Heart right ventricle (tissue), 16 donors: ENCODE measurements at regions of chr6 and their contacts with region 1.

Region 1: GRCh38 chr6:107495196-107495643 is 5.3 kb downstream of the SOBP start:
- DNase-seq: peak in 1 of 2 donors; percentile 39
- ATAC-seq: peak in 5 of 8 donors; percentile 9 to 45 (median 24)
- H3K4me3 ChIP-seq: peak overlapping the region in 6 of 10 donors; percentile 15 to 29 (median 20)
- H3K27ac ChIP-seq: peak overlapping the region; percentile 74 to 92 (median 88)
- H3K4me1 ChIP-seq: peaks cover 5 to 89% (median 69%) of the 10 kb centered on the region in 9 donors
- H3K27me3 ChIP-seq: peaks cover 0 to 33% (median 0%) of the 10 kb centered on the region in 7 donors
- CTCF ChIP-seq: no peak

Region 2: DNA sequence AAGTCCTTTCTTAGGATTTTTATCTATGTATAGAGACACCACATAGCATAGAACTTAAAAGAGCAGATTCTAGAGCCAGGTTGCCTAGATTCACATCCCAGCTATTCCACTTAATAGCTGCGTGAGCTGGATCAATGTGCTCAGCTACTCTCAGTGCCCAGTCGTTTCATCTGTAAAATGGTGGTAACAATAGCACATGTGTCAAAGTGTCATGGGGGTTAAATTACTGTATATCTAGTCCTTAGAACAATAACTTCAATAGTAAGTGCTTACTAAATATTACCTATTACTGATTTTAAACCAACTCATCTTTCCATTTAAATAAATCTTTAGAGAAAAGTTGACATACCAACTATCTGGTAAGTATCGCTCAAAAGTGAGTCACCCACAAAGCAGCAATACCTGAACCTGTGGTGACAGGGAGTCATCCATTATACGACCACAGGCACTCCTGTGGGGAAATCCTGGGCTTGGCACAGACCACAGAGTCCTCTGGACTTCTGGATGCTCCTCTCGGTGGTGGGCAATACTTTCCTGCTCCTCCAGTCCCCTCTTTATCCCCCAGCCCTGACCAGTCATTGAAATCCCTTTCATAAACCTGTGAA is 190.7 kb before region 1 on chr6:
- intact Hi-C with region 1: no loop called
- DNase-seq: no peak
- ATAC-seq: no peak
- H3K4me3 ChIP-seq: no peak overlapping the region
- H3K27ac ChIP-seq: no peak overlapping the region
- H3K4me1 ChIP-seq: no peaks in the 10 kb centered on the region
- H3K27me3 ChIP-seq: no peaks in the 10 kb centered on the region
- CTCF ChIP-seq: no peak

Region 3: DNA sequence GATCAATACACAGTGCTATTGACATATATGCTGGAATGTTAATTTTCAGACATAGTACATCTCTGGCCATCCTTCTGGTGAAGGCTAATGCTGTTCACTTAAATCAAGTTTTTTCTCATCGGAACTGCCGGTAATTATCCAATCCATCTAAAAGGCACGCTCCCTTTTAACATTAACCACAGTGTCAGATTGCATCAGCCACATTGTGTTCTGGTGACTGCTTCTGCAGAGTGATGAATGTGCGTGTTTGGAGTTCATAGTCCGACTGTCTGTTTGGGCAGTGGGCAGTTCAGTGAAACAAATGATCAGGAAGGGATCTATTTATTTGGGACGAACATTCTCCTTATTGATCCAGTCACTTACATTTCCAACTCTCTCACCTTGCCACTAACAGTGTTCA is 44.2 kb after region 1 on chr6:
- intact Hi-C with region 1: loop called in 6 of 10 experiments (anchors 5 to 10 kb)
- DNase-seq: no peak
- ATAC-seq: no peak
- H3K4me3 ChIP-seq: no peak overlapping the region
- H3K27ac ChIP-seq: no peak overlapping the region
- H3K4me1 ChIP-seq: peaks cover 0 to 70% (median 13%) of the 10 kb centered on the region in 9 donors
- H3K27me3 ChIP-seq: no peaks in the 10 kb centered on the region
- CTCF ChIP-seq: no peak